Activated CD8-positive, alpha-beta T cell treated with anti-CD3 and anti-CD28 coated beads, Interleukin-2, amount 10 ng/mL, durations not matched to agents 7 days and 5 days (primary cell): ENCODE measurements at regions of chr5 and their contacts with region 1.

Region 1: DNA sequence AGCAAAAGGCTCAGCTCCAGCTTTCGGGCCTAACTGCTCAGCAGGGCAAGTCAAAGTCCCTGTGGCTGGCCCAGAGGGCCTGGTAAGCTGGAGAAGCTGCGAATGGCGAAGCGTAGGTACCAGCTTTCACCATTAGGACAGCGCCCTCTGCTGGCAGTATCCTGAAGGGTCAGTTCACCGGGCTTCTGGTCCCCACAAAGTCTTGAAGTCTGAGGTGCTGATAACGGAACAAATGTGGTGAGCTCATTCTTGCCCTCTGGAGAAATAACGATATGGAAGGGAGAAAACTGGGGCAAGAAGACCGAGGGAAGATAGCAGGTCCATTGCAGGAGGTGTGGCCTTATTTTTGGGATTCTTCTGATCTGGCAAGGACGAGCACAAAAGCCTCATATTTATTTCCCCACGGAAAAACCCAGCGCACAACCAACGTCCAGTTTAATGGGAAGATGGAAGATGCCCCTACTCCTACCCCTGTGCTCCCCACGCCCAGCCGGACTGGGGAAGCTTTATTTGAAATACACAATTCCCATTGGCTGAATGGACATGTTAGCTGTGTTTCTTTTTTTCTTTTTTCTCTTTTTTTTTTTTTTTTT is 7.2 kb downstream of the SOWAHA start:
- DNase-seq: peak; percentile 95
- ATAC-seq: peak; percentile 92
- H3K4me3 Mint-ChIP-seq: peak overlapping the region; percentile 59
- H3K27ac Mint-ChIP-seq: no peak overlapping the region
- H3K4me1 Mint-ChIP-seq: peaks cover 33% of the 10 kb centered on the region
- H3K27me3 Mint-ChIP-seq: peaks cover 18% of the 10 kb centered on the region

Region 2: DNA sequence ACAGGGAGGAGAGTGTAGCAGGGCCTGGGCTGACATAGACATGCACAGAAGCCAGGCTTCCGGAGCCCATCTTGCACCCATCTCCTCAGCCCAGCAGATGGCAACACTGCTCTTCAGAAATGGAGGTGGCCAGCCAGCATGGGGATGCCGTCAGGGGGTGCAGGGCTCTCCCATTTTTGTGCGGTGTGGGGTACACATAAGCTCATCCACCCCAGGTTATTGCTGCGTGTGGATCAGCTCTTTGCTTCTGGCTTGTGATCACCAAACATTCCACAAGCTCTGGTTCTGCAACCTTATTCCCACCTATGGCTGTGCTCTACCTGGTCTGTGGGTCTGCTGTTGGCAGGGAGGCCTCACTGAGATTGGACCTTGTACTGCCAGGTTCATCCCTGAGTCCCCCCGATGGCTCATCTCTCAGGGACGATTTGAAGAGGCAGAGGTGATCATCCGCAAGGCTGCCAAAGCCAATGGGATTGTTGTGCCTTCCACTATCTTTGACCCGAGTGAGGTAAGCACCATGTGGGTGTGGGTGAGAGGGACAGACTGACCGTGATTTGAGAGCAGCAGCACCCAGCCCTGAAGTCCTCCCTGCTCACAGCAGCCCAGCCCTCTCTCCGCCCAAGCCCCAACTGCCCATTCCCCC is 433.5 kb before region 1 on chr5:
- CTCF ChIA-PET with region 1: interaction called, 18 read pairs
- POLR2A ChIA-PET with region 1: interaction called, 7 read pairs
- DNase-seq: peak; percentile 87
- ATAC-seq: peak; percentile 93
- H3K4me3 Mint-ChIP-seq: no peak overlapping the region
- H3K27ac Mint-ChIP-seq: peak overlapping the region; percentile 51
- H3K4me1 Mint-ChIP-seq: peaks cover 57% of the 10 kb centered on the region
- H3K27me3 Mint-ChIP-seq: no peaks in the 10 kb centered on the region

Region 3: GRCh38 chr5:132526290-132526973 is 293.8 kb before region 1 on chr5:
- CTCF ChIA-PET with region 1: interaction called, 82 read pairs
- POLR2A ChIA-PET with region 1: interaction called, 3 read pairs
- DNase-seq: peak; percentile 54
- ATAC-seq: peak; percentile 70
- H3K4me3 Mint-ChIP-seq: no peak overlapping the region
- H3K27ac Mint-ChIP-seq: peak overlapping the region; percentile 48
- H3K4me1 Mint-ChIP-seq: peaks cover 46% of the 10 kb centered on the region
- H3K27me3 Mint-ChIP-seq: no peaks in the 10 kb centered on the region

Region 4: DNA sequence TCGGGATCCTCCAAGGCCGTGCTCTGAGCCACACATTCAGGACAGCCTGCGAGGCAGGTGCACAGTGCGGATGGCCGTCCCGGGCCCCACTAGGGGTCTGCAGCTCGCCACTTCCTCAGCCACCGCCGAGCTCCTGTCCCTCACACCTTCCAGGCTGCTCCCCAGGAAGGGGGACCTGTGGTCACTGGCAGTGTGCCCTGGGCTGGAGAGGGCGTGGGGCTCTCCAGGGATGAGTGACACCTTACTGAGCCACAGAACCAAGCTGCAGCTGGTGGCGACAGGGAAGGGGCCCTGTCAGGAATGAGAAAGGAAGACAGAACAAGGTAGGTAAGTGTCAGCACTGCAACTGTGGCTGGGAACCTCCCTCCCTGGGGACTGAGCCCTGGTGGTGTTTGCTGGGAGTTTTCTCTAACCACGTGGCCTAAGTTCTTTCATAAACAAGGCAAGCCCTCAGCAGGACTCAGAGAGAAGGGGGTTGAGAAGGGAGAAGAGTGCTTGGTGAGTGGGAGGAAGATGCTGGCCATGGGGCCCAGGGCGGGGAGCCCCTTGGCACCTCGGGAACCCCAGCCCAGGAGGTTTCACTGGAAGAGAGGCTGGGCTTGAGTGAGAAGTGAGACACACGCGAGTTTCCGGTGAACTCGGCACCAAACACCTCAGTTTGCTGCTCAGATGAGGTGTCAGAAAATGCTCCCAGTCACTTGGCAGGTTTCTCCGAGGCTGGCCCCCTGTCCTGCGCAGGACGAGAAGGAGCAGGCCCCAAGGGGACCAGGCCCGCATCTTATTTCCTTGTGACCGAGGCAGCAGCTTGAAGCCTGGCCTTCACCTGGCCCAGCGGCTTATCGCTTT is 157.1 kb before region 1 on chr5:
- CTCF ChIA-PET with region 1: interaction called, 24 read pairs
- POLR2A ChIA-PET with region 1: no interaction called
- DNase-seq: peak; percentile 43
- ATAC-seq: peak; percentile 56
- H3K4me3 Mint-ChIP-seq: no peak overlapping the region
- H3K27ac Mint-ChIP-seq: peak overlapping the region; percentile 84
- H3K4me1 Mint-ChIP-seq: peaks cover 51% of the 10 kb centered on the region
- H3K27me3 Mint-ChIP-seq: no peaks in the 10 kb centered on the region

Region 5: DNA sequence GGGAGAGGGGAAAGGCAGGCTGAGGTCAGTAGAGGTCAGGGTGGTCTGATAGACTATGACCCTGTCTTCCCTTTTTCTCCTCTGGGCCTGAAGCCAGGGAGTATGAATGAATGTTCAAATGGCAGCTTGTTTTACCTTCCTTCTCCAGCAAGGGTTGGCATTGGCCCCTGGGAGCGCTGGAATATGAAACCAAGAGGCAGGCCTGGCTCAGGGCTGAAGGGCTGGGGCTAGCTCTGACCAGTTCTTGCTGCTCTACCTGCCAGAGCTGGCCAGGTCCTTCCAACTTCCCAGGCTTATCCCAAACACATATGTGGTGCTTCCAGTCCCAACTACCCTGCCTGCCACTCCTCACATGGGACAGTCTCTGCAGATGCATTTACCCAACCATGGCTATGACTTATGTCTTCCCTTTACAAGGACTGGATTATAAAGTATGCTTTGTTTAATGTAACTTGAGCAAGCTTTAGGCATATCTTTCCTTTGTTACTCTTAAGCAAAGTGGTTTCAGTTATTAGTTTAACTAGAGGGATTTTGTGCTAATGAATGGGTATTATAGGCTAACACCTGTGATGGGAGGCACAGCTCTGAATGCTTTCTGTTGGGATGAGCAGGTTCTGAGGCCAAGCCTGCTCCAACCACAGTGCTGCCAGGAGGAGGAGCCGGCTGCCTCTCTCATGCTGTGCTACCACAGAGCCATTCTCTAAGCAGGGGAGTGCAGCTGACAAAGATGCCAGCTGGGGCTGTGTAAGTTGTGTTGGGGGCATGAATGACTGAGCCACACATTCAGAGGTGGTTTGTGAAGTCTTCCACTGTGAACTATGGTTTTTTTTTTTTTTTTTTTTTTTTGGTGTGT is 66.9 kb before region 1 on chr5:
- CTCF ChIA-PET with region 1: interaction called, 31 read pairs
- POLR2A ChIA-PET with region 1: interaction called, 3 read pairs
- DNase-seq: no peak
- ATAC-seq: peak; percentile 61
- H3K4me3 Mint-ChIP-seq: no peak overlapping the region
- H3K27ac Mint-ChIP-seq: no peak overlapping the region
- H3K4me1 Mint-ChIP-seq: peaks cover 43% of the 10 kb centered on the region
- H3K27me3 Mint-ChIP-seq: no peaks in the 10 kb centered on the region

Region 6: GRCh38 chr5:132807163-132807838 is 13.0 kb before region 1 on chr5:
- CTCF ChIA-PET with region 1: interaction called, 28 read pairs
- POLR2A ChIA-PET with region 1: no interaction called
- DNase-seq: no peak
- ATAC-seq: no peak
- H3K4me3 Mint-ChIP-seq: no peak overlapping the region
- H3K27ac Mint-ChIP-seq: no peak overlapping the region
- H3K4me1 Mint-ChIP-seq: peaks cover 2% of the 10 kb centered on the region
- H3K27me3 Mint-ChIP-seq: peaks cover 75% of the 10 kb centered on the region